ENCODE measurements at regions of chr16 and their contacts with region 1.

Region 1: GRCh38 chr16:58000706-58001676 is at the start of gene USB1:
- DNase-seq: peak; percentile 70 to 77 (median 74)
- H3K4me3 ChIP-seq: peak within 1 kb of the TSS; percentile 84 to 98 (median 96)
- H3K4me3 Mint-ChIP-seq: peak within 1 kb of the TSS; percentile 92 to 95
- H3K27ac ChIP-seq: peak within 1 kb of the TSS; percentile 92 to 95
- H3K27ac Mint-ChIP-seq: peak within 1 kb of the TSS; percentile 90 to 97 (median 94)
- H3K4me1 ChIP-seq: peaks cover 39 to 48% of the 10 kb centered on the region in 2 donors
- H3K4me1 Mint-ChIP-seq: peaks cover 52% of the 10 kb centered on the region
- H3K27me3 ChIP-seq: no peaks in the 10 kb centered on the region
- H3K27me3 Mint-ChIP-seq: no peaks in the 10 kb centered on the region
- CTCF ChIP-seq: peak; percentile 81
- polyA plus RNA-seq, gene USB1: 25.7 to 55.7 (median 44.4) TPM

Region 2: GRCh38 chr16:57576429-57576870 is 424.5 kb before region 1 on chr16:
- intact Hi-C with region 1: loop called (anchors 5 kb)
- DNase-seq: peak; percentile 61 to 67 (median 65)
- H3K4me3 ChIP-seq: no peak overlapping the region
- H3K4me3 Mint-ChIP-seq: peak overlapping the region in 1 of 2 donors; percentile 21
- H3K27ac ChIP-seq: no peak overlapping the region
- H3K27ac Mint-ChIP-seq: peak overlapping the region in 1 of 7 donors; percentile 63
- H3K4me1 ChIP-seq: peaks cover 2 to 3% of the 10 kb centered on the region in 2 donors
- H3K4me1 Mint-ChIP-seq: peaks cover 7% of the 10 kb centered on the region
- H3K27me3 ChIP-seq: peaks cover 0 to 17% of the 10 kb centered on the region in 2 donors
- H3K27me3 Mint-ChIP-seq: peaks cover 23 to 44% (median 27%) of the 10 kb centered on the region in 3 donors
- CTCF ChIP-seq: peak; percentile 95

Region 3: DNA sequence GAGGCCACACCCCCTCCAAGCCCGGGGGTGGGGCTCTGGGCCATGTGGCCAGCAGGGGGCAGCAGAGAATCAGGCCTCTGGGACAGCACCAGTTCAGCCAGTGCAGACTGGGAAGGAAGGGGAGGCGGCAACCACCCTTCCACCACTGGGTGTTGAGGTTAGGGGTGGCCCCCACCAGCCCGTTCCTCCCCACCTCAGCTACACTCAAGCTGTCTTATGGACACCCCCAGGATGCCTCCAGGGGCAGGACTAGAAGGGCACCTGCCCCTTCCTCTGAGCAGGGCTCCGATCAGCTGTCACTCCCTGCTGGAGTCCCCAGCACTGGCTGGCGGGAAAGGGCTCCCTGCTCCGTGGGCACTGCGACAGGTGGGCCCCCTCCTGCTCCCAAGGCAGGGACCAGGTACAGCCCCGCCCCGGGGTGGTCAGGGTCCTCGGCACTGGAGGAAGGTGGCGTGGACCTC is 243.6 kb before region 1 on chr16:
- intact Hi-C with region 1: loop called (anchors 2 kb)
- DNase-seq: peak; percentile 76 to 77 (median 77)
- H3K4me3 ChIP-seq: no peak overlapping the region
- H3K4me3 Mint-ChIP-seq: no peak overlapping the region
- H3K27ac ChIP-seq: no peak overlapping the region
- H3K27ac Mint-ChIP-seq: no peak overlapping the region
- H3K4me1 ChIP-seq: no peaks in the 10 kb centered on the region
- H3K4me1 Mint-ChIP-seq: no peaks in the 10 kb centered on the region
- H3K27me3 ChIP-seq: no peaks in the 10 kb centered on the region
- H3K27me3 Mint-ChIP-seq: peaks cover 0 to 6% (median 2%) of the 10 kb centered on the region in 3 donors
- CTCF ChIP-seq: peak; percentile 94

Region 4: GRCh38 chr16:57893559-57894389 is 107.2 kb before region 1 on chr16:
- intact Hi-C with region 1: loop called (anchors 2 to 5 kb)
- DNase-seq: peak; percentile 93 to 97 (median 96)
- H3K4me3 ChIP-seq: peak overlapping the region in 1 of 3 experiments; percentile 60
- H3K4me3 Mint-ChIP-seq: peak overlapping the region; percentile 28 to 88
- H3K27ac ChIP-seq: peak overlapping the region; percentile 85 to 98
- H3K27ac Mint-ChIP-seq: peak overlapping the region; percentile 92 to 98 (median 96)
- H3K4me1 ChIP-seq: peaks cover 49 to 53% of the 10 kb centered on the region in 2 donors
- H3K4me1 Mint-ChIP-seq: peaks cover 58% of the 10 kb centered on the region
- H3K27me3 ChIP-seq: no peaks in the 10 kb centered on the region
- H3K27me3 Mint-ChIP-seq: peaks cover 0 to 2% (median 0%) of the 10 kb centered on the region in 3 donors
- CTCF ChIP-seq: no peak

Region 5: DNA sequence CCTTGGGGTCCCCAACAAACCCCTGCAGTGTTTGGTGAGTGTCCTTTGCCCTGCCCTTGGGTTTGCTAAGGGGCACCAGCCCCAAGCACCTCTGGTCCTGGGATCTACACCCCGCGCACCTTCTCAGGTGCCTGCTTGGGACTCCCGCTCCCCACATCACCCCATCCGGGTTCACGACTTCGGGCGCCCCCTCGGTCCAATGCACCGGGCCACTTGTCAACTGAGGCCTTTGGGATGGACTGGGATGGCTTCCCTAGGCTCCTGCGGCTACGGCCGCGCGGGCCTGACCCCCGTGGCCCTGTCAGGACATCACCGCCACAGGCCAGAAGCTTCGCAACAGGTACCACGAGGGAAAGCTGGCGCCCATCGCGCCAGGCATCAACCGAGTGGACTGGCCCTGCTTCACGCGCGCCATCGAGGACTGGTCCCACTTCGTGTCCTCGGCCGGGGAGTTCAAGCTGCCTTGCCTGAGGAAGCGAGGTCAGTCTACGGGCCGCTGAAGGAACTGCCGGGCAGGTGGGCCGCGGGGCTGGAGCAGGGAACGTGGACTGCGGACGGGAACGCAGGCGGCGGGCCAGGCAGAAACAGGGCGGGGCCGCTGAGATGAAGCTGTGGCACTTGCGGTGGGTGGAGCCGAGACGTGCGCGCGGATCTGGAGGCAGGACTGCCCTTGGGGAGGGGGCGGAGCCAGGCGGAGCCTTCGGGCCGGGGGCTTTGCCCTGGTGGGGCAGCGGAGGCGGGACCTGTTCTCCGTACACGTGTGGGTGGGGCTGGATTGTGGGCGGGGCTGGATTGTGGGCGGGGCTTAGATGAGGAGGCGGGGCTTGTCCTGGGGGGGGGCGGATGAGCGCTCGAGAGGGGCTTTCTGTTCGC is 16.4 kb before region 1 on chr16:
- intact Hi-C with region 1: loop called in 1 of 2 experiments (anchors 2 kb)
- DNase-seq: peak; percentile 70 to 84 (median 78)
- H3K4me3 ChIP-seq: peak overlapping the region; percentile 20 to 75 (median 37)
- H3K4me3 Mint-ChIP-seq: peak overlapping the region; percentile 84 to 92
- H3K27ac ChIP-seq: no peak overlapping the region
- H3K27ac Mint-ChIP-seq: peak overlapping the region in 3 of 7 donors; percentile 13 to 55 (median 30)
- H3K4me1 ChIP-seq: peaks cover 13 to 15% of the 10 kb centered on the region in 2 donors
- H3K4me1 Mint-ChIP-seq: peaks cover 11% of the 10 kb centered on the region
- H3K27me3 ChIP-seq: peaks cover 0 to 25% of the 10 kb centered on the region in 2 donors
- H3K27me3 Mint-ChIP-seq: peaks cover 31 to 37% (median 36%) of the 10 kb centered on the region in 3 donors
- CTCF ChIP-seq: no peak